Naive thymus-derived CD8-positive, alpha-beta T cell (primary cell): ENCODE measurements at regions of chr12 and their contacts with region 1.

Region 1: DNA sequence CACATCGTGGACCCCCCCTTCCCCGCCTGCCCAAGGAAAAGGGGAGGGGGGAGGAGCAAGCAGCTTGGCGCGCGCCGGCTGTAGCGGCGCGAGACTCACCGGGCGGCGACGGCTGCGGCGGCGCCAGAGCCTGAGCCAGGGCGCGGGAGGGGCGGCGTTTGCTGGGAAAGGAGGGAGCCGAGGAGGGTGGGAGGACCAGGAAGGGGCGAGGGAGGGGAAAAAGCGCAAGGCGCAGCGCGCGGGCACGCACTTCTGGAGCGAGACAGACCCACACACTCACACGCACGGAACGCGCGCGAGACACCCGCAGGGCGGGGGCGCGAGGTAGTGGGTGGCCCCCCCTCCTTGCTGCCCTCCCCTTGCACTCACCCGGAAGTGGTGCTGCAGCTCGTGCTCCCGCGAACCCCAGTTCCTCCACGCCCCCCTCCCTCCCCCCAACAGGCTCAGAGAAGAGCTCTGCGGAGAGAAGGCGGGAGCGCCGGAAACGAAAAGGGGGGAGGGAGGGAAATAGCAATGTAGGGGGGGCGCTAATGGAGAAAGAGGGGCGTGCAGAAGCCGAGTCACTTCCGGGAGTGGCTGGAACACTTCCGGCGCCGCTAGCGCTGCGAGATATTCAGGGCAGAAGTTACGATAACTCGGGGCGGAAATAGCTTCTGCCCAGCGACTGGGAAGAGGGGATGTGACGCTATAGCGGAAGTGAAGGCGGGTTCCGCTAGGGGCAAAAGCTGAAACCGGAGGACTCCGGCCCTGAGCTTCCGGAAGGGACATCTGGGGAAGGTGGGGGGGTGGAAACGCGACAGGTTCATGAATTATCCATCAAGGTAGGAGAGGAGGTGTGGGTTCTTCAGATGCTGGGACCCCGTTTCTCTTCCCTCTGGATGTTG is at the start of gene ZNF384:
- DNase-seq: peak; percentile 85 to 98 (median 96)
- ATAC-seq: peak; percentile 78 to 83
- H3K4me3 Mint-ChIP-seq: peak within 1 kb of the TSS; percentile 81 to 97 (median 92)
- H3K27ac Mint-ChIP-seq: peak within 1 kb of the TSS; percentile 89 to 99 (median 96)
- H3K4me1 Mint-ChIP-seq: peaks cover 36 to 67% (median 58%) of the 10 kb centered on the region in 4 donors
- H3K27me3 Mint-ChIP-seq: no peaks in the 10 kb centered on the region
- polyA plus RNA-seq, gene ZNF384: 17.6 to 39.6 (median 26.3) TPM

Region 2: GRCh38 chr12:6607751-6608591 is 81.3 kb before region 1 on chr12:
- POLR2A ChIA-PET with region 1: interaction called, 29 read pairs
- DNase-seq: peak in 8 of 10 donors; percentile 61 to 80 (median 76)
- ATAC-seq: peak; percentile 26 to 60
- H3K4me3 Mint-ChIP-seq: no peak overlapping the region
- H3K27ac Mint-ChIP-seq: no peak overlapping the region
- H3K4me1 Mint-ChIP-seq: peaks cover 42 to 61% (median 53%) of the 10 kb centered on the region in 4 donors
- H3K27me3 Mint-ChIP-seq: no peaks in the 10 kb centered on the region

Region 3: DNA sequence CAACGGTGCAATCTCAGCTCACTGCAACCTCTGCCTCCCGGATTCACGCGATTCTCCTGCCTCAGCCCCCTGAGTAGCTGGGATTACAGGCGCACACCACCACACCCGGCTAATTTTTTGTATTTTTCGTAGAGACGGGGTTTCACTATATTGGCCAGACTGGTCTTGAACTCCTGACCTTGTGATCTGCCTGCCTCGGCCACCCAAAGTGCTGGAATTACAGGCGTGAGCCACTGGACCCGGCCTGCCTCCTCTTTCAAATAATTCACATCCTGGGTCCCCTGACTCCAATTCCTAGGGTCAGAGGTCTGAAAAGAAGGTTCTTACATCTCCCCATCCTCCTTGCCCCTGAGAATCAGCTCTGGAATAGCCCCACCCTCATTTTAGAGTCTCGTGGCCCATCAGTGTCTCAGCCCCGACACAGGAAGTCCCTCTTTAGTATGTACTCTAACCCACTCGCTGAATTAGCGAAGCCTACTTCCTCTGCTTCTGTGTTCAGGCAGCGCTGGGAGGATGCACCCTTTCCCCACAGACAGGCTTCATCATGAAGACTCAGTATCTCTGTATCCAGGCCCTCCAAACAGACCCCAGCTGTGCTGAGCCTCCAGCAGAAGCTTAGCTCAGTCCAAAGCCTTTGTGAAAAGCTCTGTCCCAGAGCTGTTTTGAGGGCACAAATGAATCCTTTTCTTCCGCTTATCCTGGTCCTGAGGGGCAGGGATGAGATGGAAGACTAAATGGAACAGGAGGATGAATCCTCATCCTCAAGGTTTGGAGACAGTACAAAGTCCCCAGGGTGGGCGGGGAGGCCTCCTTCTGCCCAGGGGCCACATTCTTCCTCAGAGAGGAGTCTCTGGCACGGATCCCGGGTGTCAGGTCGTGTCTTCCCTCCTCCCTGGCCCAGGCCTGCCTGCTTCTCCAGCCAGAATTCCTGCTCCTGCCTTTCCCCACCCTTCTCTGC is 56.9 kb before region 1 on chr12:
- POLR2A ChIA-PET with region 1: interaction called, 21 read pairs
- DNase-seq: peak in 9 of 10 donors; percentile 43 to 77 (median 58)
- ATAC-seq: peak; percentile 65 to 72
- H3K4me3 Mint-ChIP-seq: peak overlapping the region; percentile 85 to 95 (median 90)
- H3K27ac Mint-ChIP-seq: peak overlapping the region; percentile 93 to 100 (median 98)
- H3K4me1 Mint-ChIP-seq: peaks cover 33 to 84% (median 73%) of the 10 kb centered on the region in 4 donors
- H3K27me3 Mint-ChIP-seq: no peaks in the 10 kb centered on the region

Region 4: GRCh38 chr12:6723607-6724396 is 34.6 kb after region 1 on chr12 and contains the start of gene COPS7A:
- POLR2A ChIA-PET with region 1: interaction called, 142 read pairs
- DNase-seq: peak; percentile 73 to 98 (median 92)
- ATAC-seq: peak; percentile 85 to 90
- H3K4me3 Mint-ChIP-seq: peak within 1 kb of the TSS; percentile 74 to 99 (median 93)
- H3K27ac Mint-ChIP-seq: peak within 1 kb of the TSS; percentile 92 to 98 (median 96)
- H3K4me1 Mint-ChIP-seq: peaks cover 19 to 32% (median 24%) of the 10 kb centered on the region in 4 donors
- H3K27me3 Mint-ChIP-seq: no peaks in the 10 kb centered on the region
- polyA plus RNA-seq, gene COPS7A: 34.9 to 42.4 (median 36.2) TPM

Region 5: DNA sequence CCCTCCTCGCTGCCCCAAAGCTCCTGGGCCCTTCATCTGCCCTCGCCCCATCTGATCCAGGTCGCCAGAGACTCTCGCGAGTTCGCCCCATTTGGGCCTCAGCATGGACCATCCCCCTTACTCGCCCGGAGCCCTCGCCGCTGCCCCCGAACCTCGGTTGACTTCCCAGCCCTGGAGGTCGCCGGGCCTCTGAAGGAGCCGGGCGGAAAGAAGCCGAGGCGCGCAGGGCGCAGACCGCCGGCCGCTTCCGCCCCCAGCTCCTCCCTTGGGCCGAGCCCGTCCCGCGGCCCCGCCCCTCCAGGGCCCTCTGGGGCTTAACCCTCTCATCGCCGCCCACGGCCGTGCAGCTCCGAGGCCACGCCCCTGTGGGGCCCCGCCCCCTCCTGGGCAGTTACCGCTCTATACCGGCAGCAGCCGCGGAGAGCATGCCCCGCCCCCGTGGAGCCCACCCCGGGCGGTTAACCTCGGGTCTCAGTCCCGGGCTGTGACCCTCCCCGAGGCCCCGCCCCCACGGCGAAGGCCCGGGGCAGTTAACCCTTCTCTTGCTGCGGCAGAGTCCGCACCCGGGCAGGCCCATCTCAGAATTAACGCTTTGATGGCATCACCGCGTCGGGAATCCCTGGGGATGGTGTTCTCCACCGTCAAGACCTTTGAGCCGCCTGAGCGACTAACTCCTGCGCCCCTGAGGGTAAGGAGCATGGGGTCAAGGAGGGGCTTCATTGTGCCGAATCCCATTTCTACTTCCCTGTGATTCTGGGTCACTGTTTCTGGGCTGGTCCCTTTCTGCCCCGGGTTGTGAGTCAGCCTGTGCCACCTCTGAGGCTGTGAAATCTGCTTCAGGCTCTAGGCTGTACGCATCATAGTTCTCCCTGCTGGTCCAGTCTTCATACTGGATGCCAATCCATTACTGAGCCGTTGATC is 184.1 kb after region 1 on chr12 and contains the start of gene SPSB2:
- POLR2A ChIA-PET with region 1: interaction called, 14 read pairs
- DNase-seq: peak; percentile 95 to 100 (median 98)
- ATAC-seq: peak; percentile 77 to 90
- H3K4me3 Mint-ChIP-seq: peak within 1 kb of the TSS; percentile 84 to 97 (median 90)
- H3K27ac Mint-ChIP-seq: peak within 1 kb of the TSS; percentile 80 to 95 (median 90)
- H3K4me1 Mint-ChIP-seq: peaks cover 37 to 53% (median 49%) of the 10 kb centered on the region in 4 donors
- H3K27me3 Mint-ChIP-seq: no peaks in the 10 kb centered on the region
- polyA plus RNA-seq, gene SPSB2: 10.1 to 10.6 (median 10.2) TPM